ENCODE measurements at regions of chr1 and their contacts with region 1.

Region 1: GRCh38 chr1:89762779-89763648 is 57.8 kb upstream of the LRRC8D start:
- DNase-seq: peak; percentile 90
- ATAC-seq: peak; percentile 100
- H3K4me3 Mint-ChIP-seq: peak overlapping the region; percentile 76
- H3K27ac Mint-ChIP-seq: peak overlapping the region; percentile 82
- H3K4me1 Mint-ChIP-seq: peaks cover 56% of the 10 kb centered on the region
- H3K27me3 Mint-ChIP-seq: no peaks in the 10 kb centered on the region

Region 2: DNA sequence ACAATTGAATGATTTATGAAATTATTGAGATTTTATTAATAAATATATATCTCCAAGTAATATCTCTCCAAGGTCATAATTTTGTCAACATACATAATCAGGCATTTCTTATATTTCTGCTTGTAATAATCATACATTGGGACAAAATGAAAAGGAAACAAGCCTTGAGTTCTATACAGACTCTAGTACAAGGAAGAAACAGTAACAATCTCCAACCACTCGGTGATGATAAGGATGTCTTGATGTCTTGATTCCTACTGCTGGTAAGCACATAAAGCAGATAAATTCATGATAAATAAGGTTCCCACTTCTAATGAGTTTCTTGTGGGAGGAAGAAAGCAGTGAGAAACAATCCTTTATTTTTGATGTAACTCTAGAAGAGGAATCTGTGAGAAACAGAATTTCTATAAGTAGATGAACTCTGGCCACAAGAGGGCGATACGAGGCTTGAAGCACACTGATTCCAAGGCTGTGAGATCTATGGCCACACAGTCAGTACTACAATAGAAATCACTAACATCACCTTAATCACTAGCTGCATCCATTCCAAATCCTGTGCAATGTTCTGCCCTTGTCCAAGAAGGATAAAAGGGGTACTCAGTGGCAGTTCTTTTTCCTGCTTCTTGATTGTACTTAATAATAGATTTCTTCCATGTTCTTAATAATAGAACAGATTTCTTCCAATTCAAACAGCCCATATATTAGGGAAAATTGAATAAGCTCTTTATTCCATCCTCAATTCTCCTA is 279.8 kb before region 1 on chr1:
- CTCF ChIA-PET with region 1: interaction called, 76 read pairs
- POLR2A ChIA-PET with region 1: no interaction called
- DNase-seq: peak; percentile 91
- ATAC-seq: peak; percentile 80
- H3K4me3 Mint-ChIP-seq: no peak overlapping the region
- H3K27ac Mint-ChIP-seq: no peak overlapping the region
- H3K4me1 Mint-ChIP-seq: peaks cover 15% of the 10 kb centered on the region
- H3K27me3 Mint-ChIP-seq: peaks cover 2% of the 10 kb centered on the region

Region 3: DNA sequence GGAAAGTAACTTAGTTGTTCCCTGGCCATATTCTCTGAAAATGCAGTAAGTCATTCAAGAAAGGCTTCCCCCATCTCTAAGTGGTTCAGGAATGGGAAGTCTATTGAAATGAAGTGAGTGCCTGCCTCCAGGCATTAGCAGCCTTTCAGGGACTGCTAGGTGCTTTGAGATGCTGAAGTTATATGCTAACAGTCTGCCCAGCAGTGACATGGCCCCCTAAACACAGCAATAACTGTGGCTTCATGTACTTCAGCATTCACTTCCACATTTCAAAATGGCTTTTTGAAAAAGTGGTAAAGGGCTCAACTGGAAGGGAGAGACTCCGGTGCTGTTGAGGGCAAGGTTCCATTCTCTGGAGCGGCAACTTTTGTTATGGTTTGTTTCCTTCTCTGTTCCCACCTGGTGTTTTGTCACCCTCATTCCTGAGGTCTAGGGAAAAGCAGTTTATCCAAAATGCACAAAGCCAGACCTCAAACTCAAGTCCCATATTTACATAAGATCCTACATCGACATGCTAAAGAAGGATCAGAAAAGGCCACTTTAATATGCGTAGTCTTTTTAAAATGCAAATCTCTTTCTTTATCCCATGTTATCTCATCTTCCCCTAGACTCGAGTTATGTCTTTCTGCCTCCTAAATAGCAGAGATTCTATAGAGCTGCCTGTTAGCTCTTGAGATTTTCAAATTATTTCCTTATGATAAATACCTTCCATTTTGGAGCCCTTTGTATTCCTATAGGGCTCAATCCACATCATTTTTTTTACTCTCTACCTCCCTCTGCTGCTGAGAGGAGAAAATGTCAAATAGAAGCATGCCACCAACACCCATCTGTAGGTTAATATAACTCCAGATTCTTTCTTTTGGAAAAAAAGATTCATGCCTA is 164.3 kb before region 1 on chr1:
- CTCF ChIA-PET with region 1: interaction called, 41 read pairs
- POLR2A ChIA-PET with region 1: interaction called, 5 read pairs
- DNase-seq: no peak
- ATAC-seq: peak; percentile 63
- H3K4me3 Mint-ChIP-seq: no peak overlapping the region
- H3K27ac Mint-ChIP-seq: no peak overlapping the region
- H3K4me1 Mint-ChIP-seq: peaks cover 45% of the 10 kb centered on the region
- H3K27me3 Mint-ChIP-seq: no peaks in the 10 kb centered on the region

Region 4: DNA sequence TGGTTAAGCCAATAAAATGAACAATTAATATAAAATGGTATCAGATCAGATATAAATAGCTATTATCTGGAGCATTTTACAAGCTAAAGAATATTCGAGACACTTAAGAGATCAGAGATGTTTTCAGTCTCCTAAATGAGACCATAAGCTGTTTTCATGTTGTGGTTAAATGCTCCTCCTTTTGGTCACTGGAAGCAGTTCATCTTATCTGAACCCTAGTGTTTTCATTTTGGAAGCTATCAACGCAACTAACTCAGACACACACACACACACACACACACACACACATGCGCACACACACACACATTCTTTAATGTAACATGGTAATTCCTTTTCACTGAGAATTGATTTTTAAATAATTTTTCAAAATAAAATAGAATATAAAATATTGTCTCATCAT is 140.1 kb before region 1 on chr1:
- CTCF ChIA-PET with region 1: interaction called, 220 read pairs
- POLR2A ChIA-PET with region 1: interaction called, 4 read pairs
- DNase-seq: peak; percentile 19
- ATAC-seq: no peak
- H3K4me3 Mint-ChIP-seq: no peak overlapping the region
- H3K27ac Mint-ChIP-seq: no peak overlapping the region
- H3K4me1 Mint-ChIP-seq: peaks cover 46% of the 10 kb centered on the region
- H3K27me3 Mint-ChIP-seq: no peaks in the 10 kb centered on the region

Region 5: GRCh38 chr1:89649783-89650182 is 113.2 kb before region 1 on chr1:
- CTCF ChIA-PET with region 1: interaction called, 24 read pairs
- POLR2A ChIA-PET with region 1: no interaction called
- DNase-seq: no peak
- ATAC-seq: no peak
- H3K4me3 Mint-ChIP-seq: no peak overlapping the region
- H3K27ac Mint-ChIP-seq: peak overlapping the region; percentile 62
- H3K4me1 Mint-ChIP-seq: peaks cover 70% of the 10 kb centered on the region
- H3K27me3 Mint-ChIP-seq: no peaks in the 10 kb centered on the region

Region 6: DNA sequence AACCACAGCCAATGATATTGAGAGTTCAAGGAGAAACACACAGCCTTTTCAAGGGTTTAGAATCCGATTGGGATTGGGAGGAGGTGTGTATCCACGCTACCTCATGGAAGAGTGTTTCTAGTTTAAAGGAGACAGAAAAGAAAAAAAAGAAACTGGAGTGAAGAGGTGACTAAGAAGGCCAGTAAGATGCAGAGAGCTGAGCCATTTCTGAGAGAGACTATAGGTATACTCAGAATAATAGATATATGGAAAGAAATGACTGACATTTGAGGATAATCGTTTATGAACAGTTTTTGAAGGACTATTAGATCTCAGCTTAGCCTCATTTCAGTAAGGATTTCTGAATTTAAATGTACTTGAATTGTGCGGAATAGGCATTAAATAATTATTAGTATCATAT is 87.3 kb before region 1 on chr1:
- CTCF ChIA-PET with region 1: interaction called, 25 read pairs
- POLR2A ChIA-PET with region 1: interaction called, 3 read pairs
- DNase-seq: no peak
- ATAC-seq: no peak
- H3K4me3 Mint-ChIP-seq: no peak overlapping the region
- H3K27ac Mint-ChIP-seq: no peak overlapping the region
- H3K4me1 Mint-ChIP-seq: peaks cover 56% of the 10 kb centered on the region
- H3K27me3 Mint-ChIP-seq: no peaks in the 10 kb centered on the region

Region 7: GRCh38 chr1:89719502-89720306 is 43.3 kb before region 1 on chr1:
- CTCF ChIA-PET with region 1: interaction called, 89 read pairs
- POLR2A ChIA-PET with region 1: interaction called, 15 read pairs
- DNase-seq: no peak
- ATAC-seq: peak; percentile 82
- H3K4me3 Mint-ChIP-seq: peak overlapping the region; percentile 61
- H3K27ac Mint-ChIP-seq: peak overlapping the region; percentile 97
- H3K4me1 Mint-ChIP-seq: peaks cover 83% of the 10 kb centered on the region
- H3K27me3 Mint-ChIP-seq: no peaks in the 10 kb centered on the region

Region 8: GRCh38 chr1:89799495-89799894 is 36.5 kb after region 1 on chr1:
- CTCF ChIA-PET with region 1: no interaction called
- POLR2A ChIA-PET with region 1: no interaction called
- DNase-seq: no peak
- ATAC-seq: no peak
- H3K4me3 Mint-ChIP-seq: no peak overlapping the region
- H3K27ac Mint-ChIP-seq: no peak overlapping the region
- H3K4me1 Mint-ChIP-seq: peaks cover 12% of the 10 kb centered on the region
- H3K27me3 Mint-ChIP-seq: no peaks in the 10 kb centered on the region

Region 9: DNA sequence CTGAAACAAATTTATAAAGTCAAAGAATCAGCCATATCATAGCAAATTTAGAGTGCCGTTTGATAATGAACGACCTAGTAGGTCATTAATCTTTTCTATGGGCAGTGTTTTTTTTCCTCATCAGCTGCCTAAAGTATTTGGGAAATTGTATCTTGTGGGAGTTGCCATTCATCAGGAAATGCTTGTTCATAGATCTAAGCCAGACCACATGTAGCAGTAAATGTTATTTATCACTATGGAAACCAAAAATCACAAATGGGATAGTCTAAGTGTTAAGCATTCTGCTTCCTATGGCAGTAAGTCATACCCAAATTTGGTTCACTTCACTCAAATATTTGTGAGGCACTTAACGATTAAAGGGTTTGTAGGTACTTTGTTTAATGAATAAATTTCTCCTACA is 110.8 kb after region 1 on chr1:
- CTCF ChIA-PET with region 1: no interaction called
- POLR2A ChIA-PET with region 1: no interaction called
- DNase-seq: no peak
- ATAC-seq: peak; percentile 47
- H3K4me3 Mint-ChIP-seq: no peak overlapping the region
- H3K27ac Mint-ChIP-seq: no peak overlapping the region
- H3K4me1 Mint-ChIP-seq: peaks cover 24% of the 10 kb centered on the region
- H3K27me3 Mint-ChIP-seq: no peaks in the 10 kb centered on the region

Region 10: DNA sequence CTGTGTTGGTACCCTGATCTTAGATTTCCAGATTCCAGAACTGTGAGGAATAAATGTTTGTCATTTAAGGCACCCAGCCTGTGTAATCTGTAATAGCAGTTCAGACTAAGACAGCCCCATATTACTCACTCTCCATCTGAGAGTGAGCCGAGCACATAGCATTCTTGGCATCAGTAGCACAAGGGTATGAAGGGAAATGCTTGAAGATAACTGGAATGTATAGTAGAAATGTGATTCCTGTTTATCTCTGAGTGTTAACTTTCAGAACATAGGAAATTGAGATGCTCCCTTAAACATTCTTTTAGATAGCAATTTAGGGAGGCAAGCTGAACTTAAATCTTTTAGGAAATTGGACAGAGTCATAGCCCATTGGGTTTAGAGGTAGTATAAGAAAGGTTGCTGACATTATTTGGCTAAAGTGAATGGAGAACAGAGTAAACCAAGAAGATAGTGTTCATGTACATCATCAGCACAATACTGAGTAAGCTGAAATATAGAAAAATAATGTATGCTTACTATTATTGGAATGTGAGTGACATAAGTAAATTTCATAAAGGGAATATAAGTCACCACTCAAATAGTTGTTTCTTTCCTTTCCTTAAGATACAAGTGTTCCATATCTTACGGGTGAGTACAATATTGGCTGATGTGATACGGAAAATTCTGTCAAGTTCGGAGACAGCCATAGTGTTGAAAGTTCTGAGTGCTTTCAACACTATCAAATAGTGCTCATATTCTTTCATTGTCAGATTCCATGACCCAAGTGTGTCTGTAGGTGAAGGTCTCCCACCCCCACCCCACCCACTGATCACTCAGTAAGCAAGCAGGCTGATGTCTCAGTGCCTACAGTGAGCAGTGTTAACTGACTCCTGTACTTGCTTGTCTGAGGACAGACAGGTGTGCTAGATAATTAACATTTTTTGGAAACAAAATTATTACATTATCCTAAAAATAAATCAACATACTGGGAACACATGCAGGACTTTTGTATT is 131.5 kb after region 1 on chr1:
- CTCF ChIA-PET with region 1: no interaction called
- POLR2A ChIA-PET with region 1: no interaction called
- DNase-seq: no peak
- ATAC-seq: no peak
- H3K4me3 Mint-ChIP-seq: no peak overlapping the region
- H3K27ac Mint-ChIP-seq: no peak overlapping the region
- H3K4me1 Mint-ChIP-seq: peaks cover 5% of the 10 kb centered on the region
- H3K27me3 Mint-ChIP-seq: no peaks in the 10 kb centered on the region

Region 11: GRCh38 chr1:90386899-90387720 is 624.1 kb after region 1 on chr1:
- CTCF ChIA-PET with region 1: no interaction called
- POLR2A ChIA-PET with region 1: no interaction called
- DNase-seq: no peak
- ATAC-seq: no peak
- H3K4me3 Mint-ChIP-seq: no peak overlapping the region
- H3K27ac Mint-ChIP-seq: no peak overlapping the region
- H3K4me1 Mint-ChIP-seq: no peaks in the 10 kb centered on the region
- H3K27me3 Mint-ChIP-seq: no peaks in the 10 kb centered on the region